Pancreas (tissue), 10 donors: ENCODE measurements at regions of chr7 and their contacts with region 1.

Region 1: DNA sequence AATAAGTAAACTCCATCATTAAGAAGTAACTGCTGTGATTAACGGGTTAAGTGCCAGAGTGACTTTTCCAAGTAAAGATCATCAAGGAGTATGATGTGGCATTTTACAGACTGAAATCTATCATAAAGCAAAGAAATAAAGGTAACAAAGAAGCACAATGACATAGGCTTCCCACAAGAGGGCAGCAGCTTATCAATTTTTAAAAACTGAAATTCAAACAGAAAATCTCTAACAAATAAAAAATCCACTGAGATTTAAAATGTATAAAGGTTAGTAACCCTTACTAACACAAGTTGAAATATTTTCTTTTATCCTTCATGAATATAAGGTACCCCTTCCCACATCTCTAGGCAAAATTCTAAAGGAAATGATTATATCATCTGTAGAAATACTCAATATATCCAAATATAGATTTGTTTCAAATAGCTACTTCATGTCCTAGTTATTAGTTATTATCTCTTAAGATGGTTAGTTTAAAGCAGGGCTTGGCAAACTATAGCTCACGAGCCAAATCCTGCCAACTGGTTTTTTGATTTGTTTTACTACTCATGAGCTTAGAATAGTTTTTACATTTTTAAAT is 29.2 kb downstream of the FAM3C start:
- DNase-seq: peak in 1 of 6 donors; percentile 30
- ATAC-seq: peak; percentile 53 to 76 (median 74)
- H3K4me3 ChIP-seq: no peak overlapping the region
- H3K27ac ChIP-seq: no peak overlapping the region
- H3K4me1 ChIP-seq: peaks cover 0 to 4% (median 0%) of the 10 kb centered on the region in 3 donors
- H3K27me3 ChIP-seq: no peaks in the 10 kb centered on the region
- CTCF ChIP-seq: peak; percentile 45 to 54 (median 50)

Region 2: GRCh38 chr7:121061677-121062582 is 305.0 kb before region 1 on chr7:
- intact Hi-C with region 1: no loop called
- DNase-seq: no peak
- ATAC-seq: no peak
- H3K4me3 ChIP-seq: no peak overlapping the region
- H3K27ac ChIP-seq: no peak overlapping the region
- H3K4me1 ChIP-seq: no peaks in the 10 kb centered on the region
- H3K27me3 ChIP-seq: no peaks in the 10 kb centered on the region
- CTCF ChIP-seq: no peak

Region 3: DNA sequence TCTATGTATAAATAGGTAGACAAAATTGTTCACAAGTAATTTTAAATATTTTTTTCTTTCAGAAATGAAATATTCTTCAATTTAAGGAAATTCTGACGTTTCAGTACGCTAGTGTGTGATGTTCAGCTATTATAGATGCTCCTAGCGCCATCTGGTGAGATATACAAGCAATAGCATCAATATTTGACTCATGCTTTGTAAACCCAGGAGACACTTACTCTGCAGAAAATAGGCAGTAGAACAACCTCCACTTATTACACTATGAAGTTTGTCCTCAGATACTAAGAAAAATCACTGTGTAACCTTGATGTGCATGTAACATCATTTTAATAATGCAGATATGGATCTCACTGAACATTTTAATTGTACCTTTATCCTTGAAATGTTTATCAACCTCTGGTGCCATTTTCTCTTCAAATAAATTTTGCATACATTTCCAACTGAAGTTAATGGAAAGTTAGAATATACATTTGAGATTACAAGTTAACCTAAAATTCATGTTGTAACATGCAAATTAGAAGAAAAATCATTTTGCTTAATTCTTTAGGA is 180.7 kb after region 1 on chr7:
- intact Hi-C with region 1: loop called in 2 of 3 experiments (anchors 5 to 10 kb)
- DNase-seq: no peak
- ATAC-seq: peak; percentile 90 to 96 (median 95)
- H3K4me3 ChIP-seq: no peak overlapping the region
- H3K27ac ChIP-seq: no peak overlapping the region
- H3K4me1 ChIP-seq: peaks cover 3 to 22% (median 6%) of the 10 kb centered on the region in 3 donors
- H3K27me3 ChIP-seq: no peaks in the 10 kb centered on the region
- CTCF ChIP-seq: peak; percentile 38 to 76 (median 54)

Region 4: GRCh38 chr7:121714559-121715303 is 347.8 kb after region 1 on chr7:
- intact Hi-C with region 1: no loop called
- DNase-seq: peak in 3 of 6 donors; percentile 61 to 71 (median 62)
- ATAC-seq: peak; percentile 98 to 99 (median 98)
- H3K4me3 ChIP-seq: no peak overlapping the region
- H3K27ac ChIP-seq: peak overlapping the region; percentile 45 to 82 (median 68)
- H3K4me1 ChIP-seq: peaks cover 24 to 32% (median 27%) of the 10 kb centered on the region in 3 donors
- H3K27me3 ChIP-seq: no peaks in the 10 kb centered on the region
- CTCF ChIP-seq: no peak

Region 5: DNA sequence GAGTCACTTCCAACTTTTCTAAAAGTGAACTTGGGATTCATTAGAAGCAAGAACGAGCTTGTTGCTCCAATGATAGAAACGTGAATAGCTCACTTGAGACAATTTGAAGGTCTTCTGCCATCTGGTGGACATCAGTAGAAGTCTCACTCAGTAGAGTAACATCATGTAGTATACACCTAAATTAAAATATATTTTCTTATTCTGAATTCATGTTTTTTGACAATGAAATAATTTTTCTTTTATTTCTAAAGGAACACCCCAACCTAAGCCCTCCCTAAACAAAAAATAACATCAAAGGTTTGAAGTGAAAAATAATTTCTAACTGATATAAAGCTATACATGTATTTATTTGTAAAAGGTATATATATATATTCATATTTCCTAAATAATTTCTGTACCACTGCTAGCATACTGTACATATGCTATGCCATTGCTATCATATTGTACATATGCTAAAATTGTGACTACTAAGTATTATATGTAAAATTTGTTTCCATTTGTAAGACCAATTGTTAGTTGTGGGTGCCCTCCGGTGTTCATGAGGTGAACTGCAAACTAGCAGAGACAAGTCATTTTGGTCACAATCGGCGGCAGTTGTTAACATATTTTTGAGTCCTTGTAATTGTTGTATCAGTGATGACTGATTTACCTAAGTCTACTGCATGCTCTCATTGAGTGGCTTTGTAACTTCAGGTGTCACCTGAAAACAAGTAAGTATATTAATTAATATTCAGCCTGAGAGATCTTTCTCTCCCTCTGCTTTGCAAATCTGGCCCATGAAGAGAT is 627.9 kb after region 1 on chr7:
- intact Hi-C with region 1: loop called in 1 of 3 experiments (anchors 10 kb)
- DNase-seq: peak in 5 of 6 donors; percentile 37 to 72 (median 47)
- ATAC-seq: peak; percentile 95 to 99 (median 98)
- H3K4me3 ChIP-seq: no peak overlapping the region
- H3K27ac ChIP-seq: no peak overlapping the region
- H3K4me1 ChIP-seq: no peaks in the 10 kb centered on the region
- H3K27me3 ChIP-seq: no peaks in the 10 kb centered on the region
- CTCF ChIP-seq: peak; percentile 31 to 58 (median 39)